ENCODE measurements at regions of chr1 and their contacts with region 1.

Region 1: GRCh38 chr1:9784508-9785133 is 39.1 kb downstream of the CLSTN1 start:
- DNase-seq: peak; percentile 75
- H3K4me3 Mint-ChIP-seq: no peak overlapping the region
- H3K27ac Mint-ChIP-seq: no peak overlapping the region
- H3K4me1 Mint-ChIP-seq: no peaks in the 10 kb centered on the region
- H3K27me3 Mint-ChIP-seq: no peaks in the 10 kb centered on the region
- CTCF ChIP-seq: peak; percentile 77

Region 2: GRCh38 chr1:9520411-9520810 is 264.2 kb before region 1 on chr1:
- CTCF ChIA-PET with region 1: no interaction called
- POLR2A ChIA-PET with region 1: no interaction called
- intact Hi-C with region 1: no loop called
- DNase-seq: no peak
- H3K4me3 Mint-ChIP-seq: no peak overlapping the region
- H3K27ac Mint-ChIP-seq: no peak overlapping the region
- H3K4me1 Mint-ChIP-seq: no peaks in the 10 kb centered on the region
- H3K27me3 Mint-ChIP-seq: no peaks in the 10 kb centered on the region
- CTCF ChIP-seq: no peak

Region 3: DNA sequence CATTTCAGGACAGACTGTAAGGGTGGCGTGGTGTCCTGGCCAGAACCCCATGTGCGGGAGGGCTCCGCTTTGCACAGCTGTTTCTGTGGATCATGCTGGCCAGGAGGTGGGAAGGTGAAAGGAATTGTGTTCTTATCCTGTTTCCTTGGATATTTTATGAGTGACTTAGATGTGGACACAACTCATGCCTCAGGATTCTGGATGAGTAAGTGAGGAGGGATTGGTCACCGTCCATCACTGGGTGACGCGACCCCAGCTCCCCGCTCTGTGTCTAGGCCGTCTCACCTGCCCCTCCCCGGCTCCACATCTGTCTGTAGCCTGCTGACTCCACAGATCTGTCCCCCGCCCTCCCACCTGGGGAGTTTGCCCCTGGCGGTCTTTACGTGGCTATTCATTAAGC is 84.3 kb before region 1 on chr1:
- CTCF ChIA-PET with region 1: no interaction called
- POLR2A ChIA-PET with region 1: no interaction called
- intact Hi-C with region 1: no loop called
- DNase-seq: peak; percentile 54
- H3K4me3 Mint-ChIP-seq: no peak overlapping the region
- H3K27ac Mint-ChIP-seq: peak overlapping the region; percentile 19
- H3K4me1 Mint-ChIP-seq: peaks cover 23% of the 10 kb centered on the region
- H3K27me3 Mint-ChIP-seq: no peaks in the 10 kb centered on the region
- CTCF ChIP-seq: no peak

Region 4: GRCh38 chr1:9736241-9736640 is 48.4 kb before region 1 on chr1:
- CTCF ChIA-PET with region 1: no interaction called
- POLR2A ChIA-PET with region 1: no interaction called
- intact Hi-C with region 1: no loop called
- DNase-seq: no peak
- H3K4me3 Mint-ChIP-seq: no peak overlapping the region
- H3K27ac Mint-ChIP-seq: no peak overlapping the region
- H3K4me1 Mint-ChIP-seq: no peaks in the 10 kb centered on the region
- H3K27me3 Mint-ChIP-seq: no peaks in the 10 kb centered on the region
- CTCF ChIP-seq: no peak

Region 5: DNA sequence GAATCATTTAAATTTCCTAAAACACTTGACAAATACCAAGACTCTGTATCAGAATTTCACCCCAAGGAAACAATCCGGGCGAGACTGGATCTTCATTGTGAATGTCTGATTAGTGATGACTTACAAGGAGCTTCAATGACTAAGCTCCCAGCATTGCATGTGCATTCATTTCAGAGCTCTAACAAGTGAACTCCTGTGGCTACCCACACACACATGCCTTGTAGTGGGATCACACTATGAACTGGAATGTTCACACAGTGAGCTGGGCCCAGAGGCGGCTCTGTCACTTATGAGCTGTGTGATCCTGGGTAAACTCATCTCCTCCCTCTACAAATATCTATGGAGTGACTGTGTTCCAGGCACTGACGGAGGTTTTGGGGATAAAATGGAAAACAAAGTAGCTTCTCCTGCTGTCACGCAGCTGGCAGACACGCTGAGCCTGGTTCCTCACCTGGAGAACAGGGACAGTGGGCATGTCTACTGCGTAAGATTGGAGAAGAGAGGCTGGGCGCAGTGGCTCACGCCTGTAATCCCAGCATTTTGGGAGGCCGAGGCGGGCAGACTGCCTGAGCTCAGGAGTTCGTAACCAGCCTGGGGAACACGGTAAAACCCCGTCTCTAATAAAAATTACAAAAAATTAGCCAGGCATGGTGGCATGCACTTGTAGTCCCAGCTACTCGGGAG is 17.7 kb before region 1 on chr1:
- CTCF ChIA-PET with region 1: interaction called, 13 read pairs
- POLR2A ChIA-PET with region 1: interaction called, 13 read pairs
- intact Hi-C with region 1: no loop called
- DNase-seq: peak; percentile 93
- H3K4me3 Mint-ChIP-seq: peak overlapping the region; percentile 10
- H3K27ac Mint-ChIP-seq: peak overlapping the region; percentile 74
- H3K4me1 Mint-ChIP-seq: peaks cover 6% of the 10 kb centered on the region
- H3K27me3 Mint-ChIP-seq: no peaks in the 10 kb centered on the region
- CTCF ChIP-seq: no peak

Region 6: DNA sequence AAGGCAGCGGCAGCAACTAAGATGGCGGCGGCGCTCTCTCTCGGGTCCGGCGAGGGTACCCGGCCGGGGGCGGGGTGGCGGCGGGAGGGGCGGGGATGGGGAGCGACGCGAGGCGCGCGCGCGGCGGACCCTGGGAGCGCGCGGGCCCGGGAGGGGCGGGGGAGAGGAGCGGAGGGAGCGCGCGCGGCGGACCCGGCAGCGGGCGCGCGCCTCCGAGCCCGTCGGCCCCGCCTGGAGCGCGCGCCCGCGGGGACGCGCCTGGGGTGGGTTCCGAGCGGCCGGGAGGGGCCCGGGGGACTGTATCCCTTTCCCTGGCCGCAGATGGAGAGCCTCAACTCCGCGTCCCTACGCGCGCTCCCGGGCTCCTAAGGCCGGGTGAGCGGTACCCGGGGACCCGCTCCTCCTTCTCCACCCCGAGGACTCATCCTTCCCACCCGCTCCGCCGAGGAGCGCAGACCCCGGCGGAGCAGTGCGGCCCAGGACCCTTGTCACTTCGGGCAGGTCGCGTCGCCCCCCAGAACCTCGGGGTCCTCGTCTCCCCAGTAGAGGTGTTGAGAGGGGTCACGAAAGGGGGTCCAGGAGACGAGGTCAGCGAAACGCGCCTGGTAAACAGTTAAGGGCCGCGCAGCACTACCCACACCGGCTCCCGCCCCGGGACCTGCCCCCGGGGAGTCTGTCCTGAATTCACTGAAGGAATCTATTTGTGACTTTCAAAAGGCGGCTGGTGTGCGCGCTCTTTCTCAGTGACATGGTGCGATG is 39.5 kb after region 1 on chr1 and contains the start of gene CLSTN1:
- CTCF ChIA-PET with region 1: interaction called, 18 read pairs
- POLR2A ChIA-PET with region 1: interaction called, 8 read pairs
- intact Hi-C with region 1: loop called (anchors 1 kb)
- DNase-seq: peak; percentile 84
- H3K4me3 Mint-ChIP-seq: peak within 1 kb of the TSS; percentile 91
- H3K27ac Mint-ChIP-seq: peak within 1 kb of the TSS; percentile 71
- H3K4me1 Mint-ChIP-seq: peaks cover 31% of the 10 kb centered on the region
- H3K27me3 Mint-ChIP-seq: no peaks in the 10 kb centered on the region
- CTCF ChIP-seq: no peak
- total RNA-seq, gene CLSTN1: 98.5 and 106 TPM in 2 replicates

Region 7: DNA sequence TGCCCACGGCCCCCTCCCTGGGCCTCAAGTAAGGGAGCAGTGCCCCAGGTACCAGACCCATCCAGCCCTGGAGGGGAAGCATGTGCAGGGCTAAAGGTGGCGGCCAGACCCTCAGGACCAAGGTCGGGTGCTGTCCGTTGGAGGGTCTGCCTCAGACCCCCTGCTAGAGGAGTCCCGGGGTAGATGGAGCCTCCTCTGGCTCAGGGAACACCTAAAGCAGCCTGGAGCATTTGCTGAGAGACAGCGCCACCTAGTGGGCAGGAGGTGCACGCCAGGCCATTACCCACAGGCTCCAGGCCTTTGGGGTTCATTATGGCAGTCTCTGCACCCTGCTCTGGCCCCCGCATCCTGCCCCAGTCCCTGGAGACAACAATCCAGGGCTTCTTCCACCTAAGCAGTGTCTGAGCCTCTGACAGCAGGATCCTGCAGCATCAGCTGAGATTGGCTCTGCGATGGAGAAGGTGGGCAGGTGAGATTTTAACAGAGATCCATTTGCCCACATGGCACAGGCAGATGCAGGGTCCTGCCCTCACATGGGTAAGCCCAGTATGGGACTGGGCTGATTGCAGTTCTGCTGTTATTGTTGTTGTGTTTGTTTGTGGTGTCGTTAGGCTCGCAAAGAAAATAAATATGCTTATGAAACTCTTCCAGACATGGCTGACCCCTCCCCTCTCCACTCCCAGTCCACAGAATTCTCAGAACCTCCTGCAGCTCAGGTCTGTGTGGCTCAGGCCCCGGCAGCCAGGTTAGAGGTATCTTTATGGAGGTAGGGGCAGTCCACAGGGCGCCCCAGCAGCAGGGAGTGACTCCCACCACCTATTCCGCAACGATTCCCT is 83.0 kb after region 1 on chr1:
- CTCF ChIA-PET with region 1: interaction called, 190 read pairs
- POLR2A ChIA-PET with region 1: interaction called, 11 read pairs
- intact Hi-C with region 1: loop called (anchors 1 kb)
- DNase-seq: peak; percentile 79
- H3K4me3 Mint-ChIP-seq: no peak overlapping the region
- H3K27ac Mint-ChIP-seq: no peak overlapping the region
- H3K4me1 Mint-ChIP-seq: peaks cover 7% of the 10 kb centered on the region
- H3K27me3 Mint-ChIP-seq: no peaks in the 10 kb centered on the region
- CTCF ChIP-seq: peak; percentile 93

Measured in MCF 10A (cell line).